ENCODE measurements at regions of chr20 and their contacts with region 1.

Region 1: GRCh38 chr20:10219452-10219791 is 792 bp downstream of the SNAP25 start:
- DNase-seq: peak; percentile 29
- H3K4me3 ChIP-seq: no peak overlapping the region
- H3K27ac ChIP-seq: no peak overlapping the region
- H3K4me1 ChIP-seq: peaks cover 12% of the 10 kb centered on the region
- H3K27me3 ChIP-seq: peaks cover 6% of the 10 kb centered on the region
- CTCF ChIP-seq: no peak

Region 2: GRCh38 chr20:10115021-10115420 is 104.4 kb before region 1 on chr20:
- CTCF ChIA-PET with region 1: no interaction called
- dilution Hi-C with region 1: no loop called
- in situ Hi-C with region 1: no loop called
- intact Hi-C with region 1: loop called (anchors 1 kb)
- DNase-seq: peak; percentile 64
- H3K4me3 ChIP-seq: no peak overlapping the region
- H3K27ac ChIP-seq: no peak overlapping the region
- H3K4me1 ChIP-seq: peaks cover 36% of the 10 kb centered on the region
- H3K27me3 ChIP-seq: no peaks in the 10 kb centered on the region
- CTCF ChIP-seq: no peak

Region 3: GRCh38 chr20:10419550-10420133 is 200.2 kb after region 1 on chr20:
- CTCF ChIA-PET with region 1: no interaction called
- dilution Hi-C with region 1: no loop called
- in situ Hi-C with region 1: no loop called
- intact Hi-C with region 1: loop called (anchors 5 kb)
- DNase-seq: peak; percentile 87
- H3K4me3 ChIP-seq: peak overlapping the region; percentile 35 to 40 (median 36)
- H3K27ac ChIP-seq: peak overlapping the region; percentile 96
- H3K4me1 ChIP-seq: peaks cover 38% of the 10 kb centered on the region
- H3K27me3 ChIP-seq: no peaks in the 10 kb centered on the region
- CTCF ChIP-seq: no peak

Region 4: DNA sequence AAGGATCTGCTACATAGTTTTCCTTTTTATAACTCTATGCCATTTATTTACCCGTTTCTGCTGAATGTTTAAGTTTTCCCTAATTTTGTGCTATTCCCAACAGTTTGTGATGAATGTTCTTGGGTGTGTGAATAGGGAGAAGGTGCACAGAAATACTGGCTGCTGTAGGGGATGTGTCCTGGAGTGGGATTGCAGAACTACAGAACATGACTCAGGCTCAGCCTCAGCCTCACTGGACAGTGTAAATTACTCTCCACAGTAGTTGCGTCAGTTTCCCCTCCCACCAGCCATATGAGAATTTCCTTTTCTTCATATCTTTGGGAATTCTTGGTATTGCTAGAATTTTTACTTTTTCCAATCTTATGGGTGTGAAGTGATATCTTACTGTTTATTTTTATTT is 272.6 kb after region 1 on chr20:
- CTCF ChIA-PET with region 1: no interaction called
- dilution Hi-C with region 1: no loop called
- in situ Hi-C with region 1: no loop called
- intact Hi-C with region 1: no loop called
- DNase-seq: no peak
- H3K4me3 ChIP-seq: no peak overlapping the region
- H3K27ac ChIP-seq: no peak overlapping the region
- H3K4me1 ChIP-seq: peaks cover 7% of the 10 kb centered on the region
- H3K27me3 ChIP-seq: no peaks in the 10 kb centered on the region
- CTCF ChIP-seq: no peak